Aorta (tissue), 5 donors: ENCODE measurements at regions of chr9 and their contacts with region 1.

Region 1: DNA sequence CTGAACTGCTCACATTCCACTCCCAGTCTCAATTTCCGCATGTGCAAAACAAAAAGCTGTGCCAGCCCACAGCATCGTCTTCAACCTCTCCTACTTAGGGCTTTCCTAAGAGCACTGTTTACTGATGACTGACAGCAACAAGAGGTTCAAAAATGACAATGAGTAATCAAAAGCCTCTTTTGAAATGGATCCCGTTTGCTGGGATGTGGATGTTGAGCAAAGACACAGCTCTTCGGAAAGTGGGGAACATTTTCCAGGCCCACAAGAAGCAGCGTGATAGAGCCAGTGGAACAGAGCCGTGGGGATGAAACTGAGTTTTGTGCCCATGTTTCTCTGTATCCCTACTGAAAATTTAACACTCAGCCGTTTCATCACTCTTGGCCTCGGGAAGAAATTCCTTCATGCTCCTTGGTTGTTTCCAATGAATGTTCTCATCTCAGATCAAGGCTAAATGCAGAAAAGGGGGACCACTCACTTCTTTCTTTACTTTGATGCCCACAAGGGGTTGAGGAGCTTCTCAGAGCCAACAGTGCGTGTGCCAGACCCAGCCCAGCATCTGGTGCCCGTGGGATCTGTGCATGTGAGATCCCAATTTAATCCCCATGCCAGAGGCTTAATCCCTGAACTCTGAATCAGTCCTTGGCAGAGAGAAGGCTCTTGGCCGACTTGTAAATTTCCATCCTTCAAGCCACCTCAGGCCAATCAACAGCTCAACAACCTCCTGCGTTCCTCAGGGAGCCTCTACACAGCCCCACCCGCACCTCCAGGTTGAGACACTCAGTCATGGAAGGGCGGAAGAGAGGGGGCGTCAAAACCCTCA is 230.2 kb upstream of the DAPK1 start:
- DNase-seq: peak; percentile 73 to 80
- ATAC-seq: peak; percentile 82
- H3K4me3 ChIP-seq: no peak overlapping the region
- H3K27ac ChIP-seq: peak overlapping the region; percentile 68 to 94
- H3K4me1 ChIP-seq: no peaks in the 10 kb centered on the region
- H3K27me3 ChIP-seq: no peaks in the 10 kb centered on the region

Region 2: GRCh38 chr9:87148331-87149104 is 118.9 kb before region 1 on chr9:
- intact Hi-C with region 1: loop called in 1 of 2 experiments (anchors 5 kb)
- DNase-seq: peak; percentile 94 to 95
- ATAC-seq: peak; percentile 95
- H3K4me3 ChIP-seq: no peak overlapping the region
- H3K27ac ChIP-seq: peak overlapping the region; percentile 98 to 99
- H3K4me1 ChIP-seq: peaks cover 0 to 3% of the 10 kb centered on the region in 2 donors
- H3K27me3 ChIP-seq: no peaks in the 10 kb centered on the region

Region 3: DNA sequence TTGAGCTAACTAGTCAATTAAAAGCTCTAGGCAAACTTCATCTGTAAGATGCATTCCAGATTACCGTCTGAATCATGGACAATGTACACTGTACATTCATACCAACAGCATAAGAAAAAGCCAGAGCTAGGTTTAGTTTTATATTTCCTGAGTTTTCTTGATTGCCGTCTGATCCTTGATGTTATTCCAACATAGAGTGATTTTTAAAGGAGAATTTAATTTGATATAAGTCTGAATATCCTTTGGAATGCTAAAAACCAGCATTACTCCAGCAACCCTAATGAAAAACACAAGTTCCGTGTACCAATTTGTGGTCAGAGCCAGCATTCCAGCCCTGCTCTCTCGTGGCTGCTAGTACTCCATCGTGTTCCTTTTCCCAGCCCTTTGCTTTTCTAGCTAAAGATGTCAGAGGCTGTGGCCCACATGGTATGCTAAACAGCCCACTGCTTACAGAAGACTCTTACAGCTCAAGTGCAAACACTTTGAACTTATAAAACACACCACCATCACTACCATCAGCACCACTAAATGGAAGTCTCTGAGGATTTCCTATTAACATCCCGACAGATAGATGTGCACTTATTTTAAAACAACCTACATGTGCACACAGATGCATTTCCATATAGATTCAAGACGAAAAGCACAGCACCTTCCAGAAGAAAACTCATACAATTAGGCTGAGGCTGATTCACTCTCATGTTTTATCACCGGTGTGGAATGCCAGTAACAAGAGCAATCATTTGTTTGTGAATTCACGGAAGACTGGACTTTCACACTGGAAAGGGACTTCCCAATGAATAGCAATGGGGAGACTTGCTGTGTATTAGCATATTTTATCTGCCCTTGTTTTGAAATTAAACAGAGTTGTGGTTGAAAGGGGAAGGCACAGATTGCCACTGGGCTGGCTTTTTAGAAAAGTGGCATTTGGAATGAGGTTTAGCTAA is 73.3 kb before region 1 on chr9:
- intact Hi-C with region 1: no loop called
- DNase-seq: peak in 1 of 2 donors; percentile 49
- ATAC-seq: no peak
- H3K4me3 ChIP-seq: no peak overlapping the region
- H3K27ac ChIP-seq: no peak overlapping the region
- H3K4me1 ChIP-seq: peaks cover 3% of the 10 kb centered on the region in 2 donors
- H3K27me3 ChIP-seq: no peaks in the 10 kb centered on the region